ENCODE measurements at regions of chr12 and their contacts with region 1.

Region 1: GRCh38 chr12:57069523-57069922 is 9.1 kb downstream of the NEMP1 start:
- DNase-seq: peak; percentile 31 to 60
- H3K4me3 ChIP-seq: no peak overlapping the region
- H3K27ac ChIP-seq: no peak overlapping the region
- H3K4me1 ChIP-seq: no peaks in the 10 kb centered on the region
- H3K27me3 ChIP-seq: no peaks in the 10 kb centered on the region
- CTCF ChIP-seq: peak; percentile 81

Region 2: GRCh38 chr12:57046947-57047890 is 22.3 kb before region 1 on chr12:
- CTCF ChIA-PET with region 1: interaction called, 10 read pairs
- POLR2A ChIA-PET with region 1: no interaction called
- intact Hi-C with region 1: no loop called
- DNase-seq: no peak
- H3K4me3 ChIP-seq: no peak overlapping the region
- H3K27ac ChIP-seq: no peak overlapping the region
- H3K4me1 ChIP-seq: no peaks in the 10 kb centered on the region
- H3K27me3 ChIP-seq: peaks cover 65% of the 10 kb centered on the region; the same call in 1 of the 2 replicates
- CTCF ChIP-seq: no peak

Region 3: GRCh38 chr12:57175428-57176138 is 106.1 kb after region 1 on chr12:
- CTCF ChIA-PET with region 1: interaction called, 6 read pairs
- POLR2A ChIA-PET with region 1: interaction called, 3 read pairs
- intact Hi-C with region 1: loop called (anchors 2 kb)
- DNase-seq: peak; percentile 60 to 89
- H3K4me3 ChIP-seq: no peak overlapping the region
- H3K27ac ChIP-seq: no peak overlapping the region
- H3K4me1 ChIP-seq: peaks cover 15% of the 10 kb centered on the region
- H3K27me3 ChIP-seq: no peaks in the 10 kb centered on the region
- CTCF ChIP-seq: peak; percentile 81

Measured in PC-9 (cell line).